Breast epithelium (tissue), 4 donors: ENCODE measurements at regions of chr18 and their contacts with region 1.

Region 1: GRCh38 chr18:59402432-59403090 is 43.5 kb upstream of the LMAN1 start:
- DNase-seq: peak; percentile 59 to 69
- H3K4me3 ChIP-seq: no peak overlapping the region
- H3K27ac ChIP-seq: no peak overlapping the region
- H3K4me1 ChIP-seq: no peaks in the 10 kb centered on the region
- H3K27me3 ChIP-seq: no peaks in the 10 kb centered on the region
- CTCF ChIP-seq: peak in 2 of 3 donors; percentile 82 to 85
- POLR2A ChIP-seq: no peak

Region 2: DNA sequence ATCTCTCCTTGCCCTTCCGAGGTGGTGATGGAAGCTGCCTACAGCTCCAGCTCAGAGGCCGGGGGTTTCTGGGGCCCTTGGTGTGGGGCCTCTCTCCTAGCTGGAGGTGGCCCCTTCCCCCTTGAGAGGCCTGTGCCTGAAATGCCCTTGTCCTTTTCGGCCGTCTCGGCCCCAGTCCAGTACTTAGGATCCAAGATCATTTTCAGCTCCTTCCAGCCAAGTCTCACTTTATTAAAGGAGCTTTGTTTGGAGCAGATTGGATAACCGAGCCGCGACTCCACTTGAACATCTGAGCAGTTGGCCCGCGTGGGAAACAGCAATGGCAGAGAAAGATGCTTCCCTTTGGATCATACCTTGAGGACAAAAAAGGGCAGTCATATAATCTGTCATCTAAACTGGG is 1233.6 kb before region 1 on chr18:
- intact Hi-C with region 1: no loop called
- DNase-seq: no peak
- H3K4me3 ChIP-seq: no peak overlapping the region
- H3K27ac ChIP-seq: no peak overlapping the region
- H3K4me1 ChIP-seq: no peaks in the 10 kb centered on the region
- H3K27me3 ChIP-seq: no peaks in the 10 kb centered on the region
- CTCF ChIP-seq: no peak
- POLR2A ChIP-seq: no peak

Region 3: GRCh38 chr18:59308248-59308937 is 94.2 kb before region 1 on chr18:
- intact Hi-C with region 1: loop called (anchors 5 kb)
- DNase-seq: peak; percentile 57 to 66
- H3K4me3 ChIP-seq: peak overlapping the region in 2 of 3 donors; percentile 23 to 54
- H3K27ac ChIP-seq: no peak overlapping the region
- H3K4me1 ChIP-seq: no peaks in the 10 kb centered on the region
- H3K27me3 ChIP-seq: peaks cover 0 to 12% of the 10 kb centered on the region in 2 donors
- CTCF ChIP-seq: peak in 2 of 3 donors; percentile 64 to 65
- POLR2A ChIP-seq: no peak